Thyroid gland (tissue), 4 donors: ENCODE measurements at regions of chr19 and their contacts with region 1.

Region 1: GRCh38 chr19:6737284-6738046 is at the start of gene GPR108:
- DNase-seq: peak; percentile 100
- H3K4me3 ChIP-seq: peak within 1 kb of the TSS; percentile 64 to 87 (median 82)
- H3K27ac ChIP-seq: peak within 1 kb of the TSS; percentile 90 to 93 (median 93)
- H3K4me1 ChIP-seq: peaks cover 36 to 39% of the 10 kb centered on the region in 2 donors
- H3K27me3 ChIP-seq: no peaks in the 10 kb centered on the region
- CTCF ChIP-seq: no peak
- POLR2A ChIP-seq: peak in 1 of 2 donors; percentile 71
- total RNA-seq, gene GPR108: 87.9 to 152 (median 116) TPM

Region 2: DNA sequence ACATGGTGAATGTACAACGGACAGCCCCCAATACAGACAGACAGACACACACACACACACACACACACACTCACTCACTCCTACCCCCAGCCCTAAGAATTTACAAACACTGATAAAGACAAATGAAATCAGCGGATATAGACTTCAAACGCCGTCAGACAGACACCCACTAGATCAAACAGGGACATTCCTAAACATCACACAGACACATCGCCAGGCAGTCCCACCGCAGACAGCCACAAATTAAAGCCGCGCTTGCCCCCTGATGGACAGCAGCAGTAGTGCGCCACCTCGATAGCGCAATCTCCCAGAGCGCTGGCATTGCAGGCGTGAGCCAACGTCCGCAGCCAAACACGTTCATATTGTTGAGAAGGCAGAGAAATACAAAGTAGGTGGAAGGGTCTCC is 125.2 kb after region 1 on chr19:
- intact Hi-C with region 1: loop called (anchors 10 kb)
- DNase-seq: peak; percentile 73 to 78
- H3K4me3 ChIP-seq: no peak overlapping the region
- H3K27ac ChIP-seq: no peak overlapping the region
- H3K4me1 ChIP-seq: peaks cover 4 to 5% of the 10 kb centered on the region in 2 donors
- H3K27me3 ChIP-seq: no peaks in the 10 kb centered on the region
- CTCF ChIP-seq: peak; percentile 69 to 84 (median 76)
- POLR2A ChIP-seq: no peak